ENCODE measurements at regions of chr18 and their contacts with region 1.

Region 1: GRCh38 chr18:57621246-57621604 is 411 bp downstream of the NARS1 start:
- DNase-seq: peak in 1 of 4 experiments; percentile 27
- ATAC-seq: peak; percentile 59
- H3K4me3 ChIP-seq: peak overlapping the region; percentile 64
- H3K27ac ChIP-seq: peak overlapping the region; percentile 86
- H3K4me1 ChIP-seq: peaks cover 6 to 13% of the 10 kb centered on the region in 2 experiments; a peak in 4 of 5 replicates
- H3K27me3 ChIP-seq: no peaks in the 10 kb centered on the region
- CTCF ChIP-seq: no peak
- EP300 ChIP-seq: no peak
- POLR2A ChIP-seq: no peak
- RAD21 ChIP-seq: no peak

Region 2: GRCh38 chr18:57585855-57586250 is 35.4 kb before region 1 on chr18:
- CTCF ChIA-PET with region 1: no interaction called
- POLR2A ChIA-PET with region 1: interaction called, 3 read pairs
- in situ Hi-C with region 1: no loop called
- intact Hi-C with region 1: loop called (anchors 2 kb)
- DNase-seq: peak in 1 of 4 experiments; percentile 9
- ATAC-seq: peak; percentile 2; the same call in 1 of the 3 replicates
- H3K4me3 ChIP-seq: peak overlapping the region; percentile 76
- H3K27ac ChIP-seq: peak overlapping the region; percentile 81
- H3K4me1 ChIP-seq: peaks cover 44 to 46% of the 10 kb centered on the region in 2 experiments; a peak in 4 of 5 replicates
- H3K27me3 ChIP-seq: no peaks in the 10 kb centered on the region
- CTCF ChIP-seq: no peak
- EP300 ChIP-seq: no peak
- POLR2A ChIP-seq: no peak
- RAD21 ChIP-seq: no peak

Region 3: GRCh38 chr18:57603871-57604270 is 17.4 kb before region 1 on chr18:
- CTCF ChIA-PET with region 1: no interaction called
- POLR2A ChIA-PET with region 1: interaction called, 14 read pairs
- in situ Hi-C with region 1: no loop called
- intact Hi-C with region 1: no loop called
- DNase-seq: peak; percentile 55 to 69 (median 63)
- ATAC-seq: peak; percentile 81
- H3K4me3 ChIP-seq: no peak overlapping the region
- H3K27ac ChIP-seq: peak overlapping the region; percentile 40; the same call in 2 of the 3 replicates
- H3K4me1 ChIP-seq: peaks cover 0 to 4% of the 10 kb centered on the region in 2 experiments; a peak in 3 of 5 replicates
- H3K27me3 ChIP-seq: no peaks in the 10 kb centered on the region
- CTCF ChIP-seq: no peak
- EP300 ChIP-seq: peak; percentile 49; the same call in 1 of the 2 replicates
- POLR2A ChIP-seq: no peak
- RAD21 ChIP-seq: no peak

Region 4: GRCh38 chr18:57715681-57716080 is 94.5 kb after region 1 on chr18:
- CTCF ChIA-PET with region 1: no interaction called
- POLR2A ChIA-PET with region 1: no interaction called
- in situ Hi-C with region 1: no loop called
- intact Hi-C with region 1: no loop called
- DNase-seq: no peak
- ATAC-seq: no peak
- H3K4me3 ChIP-seq: no peak overlapping the region
- H3K27ac ChIP-seq: no peak overlapping the region
- H3K4me1 ChIP-seq: no peaks in the 10 kb centered on the region
- H3K27me3 ChIP-seq: no peaks in the 10 kb centered on the region
- CTCF ChIP-seq: no peak
- EP300 ChIP-seq: no peak
- POLR2A ChIP-seq: no peak
- RAD21 ChIP-seq: no peak

Region 5: GRCh38 chr18:58128381-58129374 is 507.5 kb after region 1 on chr18:
- CTCF ChIA-PET with region 1: no interaction called
- POLR2A ChIA-PET with region 1: no interaction called
- in situ Hi-C with region 1: loop called (anchors 10 kb)
- intact Hi-C with region 1: no loop called
- DNase-seq: no peak
- ATAC-seq: no peak
- H3K4me3 ChIP-seq: no peak overlapping the region
- H3K27ac ChIP-seq: no peak overlapping the region
- H3K4me1 ChIP-seq: no peaks in the 10 kb centered on the region
- H3K27me3 ChIP-seq: no peaks in the 10 kb centered on the region
- CTCF ChIP-seq: no peak
- EP300 ChIP-seq: no peak
- POLR2A ChIP-seq: no peak
- RAD21 ChIP-seq: no peak